Caco-2 (cell line): ENCODE measurements at regions of chr15 and their contacts with region 1.

Region 1: DNA sequence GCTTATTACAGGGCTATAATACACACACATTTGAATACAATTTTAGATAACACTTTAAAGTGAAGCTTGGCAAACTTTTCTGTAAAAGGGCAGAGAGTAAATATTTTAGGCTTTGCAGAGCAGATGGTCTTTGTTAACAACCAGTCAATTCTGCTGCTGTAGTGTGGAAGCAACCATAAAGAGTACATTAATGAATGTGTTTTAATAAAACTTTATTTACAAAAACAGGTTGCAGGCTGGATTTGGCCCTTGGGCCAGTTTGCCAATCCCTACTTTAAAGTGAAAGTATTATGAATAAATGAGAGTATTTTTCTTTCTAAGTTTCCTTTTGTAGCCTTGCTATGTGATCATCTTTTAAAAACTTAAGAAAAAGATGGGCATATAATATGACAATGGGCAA is 20.7 kb upstream of the ANKRD34C start:
- DNase-seq: no peak
- H3K4me3 ChIP-seq: no peak overlapping the region
- H3K4me3 Mint-ChIP-seq: no peak overlapping the region
- H3K27ac Mint-ChIP-seq: no peak overlapping the region
- H3K4me1 ChIP-seq: no peaks in the 10 kb centered on the region
- H3K4me1 Mint-ChIP-seq: no peaks in the 10 kb centered on the region
- H3K27me3 ChIP-seq: no peaks in the 10 kb centered on the region
- H3K27me3 Mint-ChIP-seq: peaks cover 14% of the 10 kb centered on the region
- CTCF ChIP-seq: no peak

Region 2: DNA sequence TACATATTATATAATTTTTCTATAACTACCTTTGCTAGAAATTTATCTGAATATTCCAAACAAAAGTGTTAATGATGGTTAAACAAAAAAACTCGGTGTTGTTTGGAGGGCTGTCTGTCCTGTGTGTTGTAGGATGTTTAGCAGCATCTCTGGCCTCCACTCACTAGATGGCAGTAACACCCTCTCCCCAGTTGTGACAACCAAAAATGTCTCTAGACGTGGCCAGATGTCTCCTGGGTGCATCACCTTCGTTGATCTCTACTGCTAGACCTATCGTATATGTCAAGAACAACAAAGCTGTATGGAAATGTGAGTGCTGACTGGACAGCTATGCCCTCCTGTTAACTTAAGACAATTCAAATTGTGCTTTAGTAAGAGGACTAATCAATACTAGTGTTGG is 34.7 kb after region 1 on chr15:
- CTCF ChIA-PET with region 1: no interaction called
- POLR2A ChIA-PET with region 1: no interaction called
- intact Hi-C with region 1: no loop called
- DNase-seq: peak in 1 of 2 experiments; percentile 13
- H3K4me3 ChIP-seq: no peak overlapping the region
- H3K4me3 Mint-ChIP-seq: no peak overlapping the region
- H3K27ac Mint-ChIP-seq: no peak overlapping the region
- H3K4me1 ChIP-seq: no peaks in the 10 kb centered on the region
- H3K4me1 Mint-ChIP-seq: no peaks in the 10 kb centered on the region
- H3K27me3 ChIP-seq: no peaks in the 10 kb centered on the region
- H3K27me3 Mint-ChIP-seq: peaks cover 10% of the 10 kb centered on the region
- CTCF ChIP-seq: peak; percentile 33 to 36

Region 3: DNA sequence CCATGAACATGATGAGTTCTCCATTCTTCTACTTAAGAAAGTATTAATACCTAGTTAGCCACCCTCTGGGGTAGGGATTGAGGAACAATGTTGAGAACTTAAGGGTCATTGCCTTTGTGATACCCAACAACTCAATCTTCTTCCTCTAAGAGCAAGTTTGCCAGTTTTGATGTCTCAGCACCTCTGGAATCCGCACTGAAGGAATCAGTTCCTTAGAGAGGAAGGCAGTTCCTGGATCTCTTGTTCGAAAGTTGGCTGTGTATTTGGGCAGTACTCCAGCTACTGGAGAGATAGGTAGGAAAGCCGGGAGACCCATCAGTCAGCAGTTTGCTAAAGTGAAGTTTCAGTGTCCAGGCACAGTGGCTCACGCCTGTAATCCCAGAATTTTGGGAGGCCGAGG is 670.6 kb after region 1 on chr15:
- CTCF ChIA-PET with region 1: no interaction called
- POLR2A ChIA-PET with region 1: no interaction called
- intact Hi-C with region 1: loop called (anchors 5 kb)
- DNase-seq: no peak
- H3K4me3 ChIP-seq: no peak overlapping the region
- H3K4me3 Mint-ChIP-seq: no peak overlapping the region
- H3K27ac Mint-ChIP-seq: no peak overlapping the region
- H3K4me1 ChIP-seq: no peaks in the 10 kb centered on the region
- H3K4me1 Mint-ChIP-seq: no peaks in the 10 kb centered on the region
- H3K27me3 ChIP-seq: no peaks in the 10 kb centered on the region
- H3K27me3 Mint-ChIP-seq: peaks cover 6% of the 10 kb centered on the region
- CTCF ChIP-seq: no peak